HepG2 (cell line): ENCODE measurements at regions of chr11 and their contacts with region 1.

Region 1: GRCh38 chr11:83819933-83820549 is 533.9 kb upstream of the CCDC90B start:
- DNase-seq: peak; percentile 43
- ATAC-seq: peak; percentile 78
- H3K4me3 ChIP-seq: no peak overlapping the region
- H3K27ac ChIP-seq: no peak overlapping the region
- H3K4me1 ChIP-seq: no peaks in the 10 kb centered on the region
- H3K27me3 ChIP-seq: no peaks in the 10 kb centered on the region
- CTCF ChIP-seq: peak; percentile 67
- EP300 ChIP-seq: no peak
- POLR2A ChIP-seq: no peak
- RAD21 ChIP-seq: peak; percentile 45; the same call in 1 of the 2 replicates

Region 2: DNA sequence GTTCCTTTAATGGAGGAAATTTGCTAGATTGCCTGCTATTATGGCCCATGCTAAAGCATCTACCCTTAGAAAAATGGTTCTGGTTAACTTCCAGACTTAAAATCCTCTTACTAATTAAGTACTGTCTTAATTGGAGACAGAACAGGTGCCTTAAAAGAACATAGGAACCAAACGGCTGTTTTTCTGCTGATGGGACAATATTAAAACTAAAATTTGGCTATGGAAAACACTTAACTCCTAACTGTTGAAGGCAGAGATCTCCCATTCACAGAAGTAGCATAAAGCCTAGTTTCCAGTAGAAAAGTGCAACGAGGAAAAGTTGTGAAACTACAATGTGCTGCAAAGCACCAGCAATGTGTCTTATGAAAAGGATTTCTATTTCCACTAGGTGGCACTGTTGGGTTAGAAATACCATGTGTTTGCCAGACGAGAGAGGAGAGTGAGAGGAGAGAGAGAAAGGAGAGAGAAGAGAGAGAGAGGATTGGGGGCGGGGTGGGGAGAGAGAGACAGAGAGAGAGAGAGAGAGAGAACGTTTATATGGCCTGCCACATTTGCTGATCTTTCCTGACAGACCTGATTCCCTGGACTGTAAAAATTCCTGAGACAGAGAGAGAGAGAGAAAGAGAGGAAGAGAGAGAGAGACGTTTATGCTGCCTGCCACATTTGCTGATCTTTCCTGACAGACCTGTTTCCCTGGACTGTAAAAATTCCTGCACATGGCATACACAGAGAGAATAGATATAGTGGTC is 1137.9 kb before region 1 on chr11:
- CTCF ChIA-PET with region 1: interaction called, 3 read pairs
- POLR2A ChIA-PET with region 1: no interaction called
- in situ Hi-C with region 1: no loop called
- intact Hi-C with region 1: loop called (anchors 2 kb)
- DNase-seq: peak; percentile 67
- ATAC-seq: peak; percentile 96
- H3K4me3 ChIP-seq: no peak overlapping the region
- H3K27ac ChIP-seq: no peak overlapping the region
- H3K4me1 ChIP-seq: no peaks in the 10 kb centered on the region
- H3K27me3 ChIP-seq: no peaks in the 10 kb centered on the region
- CTCF ChIP-seq: peak; percentile 82
- EP300 ChIP-seq: no peak
- POLR2A ChIP-seq: no peak
- RAD21 ChIP-seq: peak; percentile 46; the same call in 1 of the 2 replicates

Region 3: GRCh38 chr11:82718307-82718706 is 1101.7 kb before region 1 on chr11:
- CTCF ChIA-PET with region 1: interaction called, 5 read pairs
- POLR2A ChIA-PET with region 1: no interaction called
- in situ Hi-C with region 1: loop called (anchors 25 kb)
- intact Hi-C with region 1: loop called (anchors 1 kb)
- DNase-seq: peak; percentile 7
- ATAC-seq: peak; percentile 72
- H3K4me3 ChIP-seq: no peak overlapping the region
- H3K27ac ChIP-seq: no peak overlapping the region
- H3K4me1 ChIP-seq: no peaks in the 10 kb centered on the region
- H3K27me3 ChIP-seq: peaks cover 0 to 18% of the 10 kb centered on the region in 2 experiments; a peak in 3 of 5 replicates
- CTCF ChIP-seq: peak; percentile 74
- EP300 ChIP-seq: no peak
- POLR2A ChIP-seq: no peak
- RAD21 ChIP-seq: no peak

Region 4: DNA sequence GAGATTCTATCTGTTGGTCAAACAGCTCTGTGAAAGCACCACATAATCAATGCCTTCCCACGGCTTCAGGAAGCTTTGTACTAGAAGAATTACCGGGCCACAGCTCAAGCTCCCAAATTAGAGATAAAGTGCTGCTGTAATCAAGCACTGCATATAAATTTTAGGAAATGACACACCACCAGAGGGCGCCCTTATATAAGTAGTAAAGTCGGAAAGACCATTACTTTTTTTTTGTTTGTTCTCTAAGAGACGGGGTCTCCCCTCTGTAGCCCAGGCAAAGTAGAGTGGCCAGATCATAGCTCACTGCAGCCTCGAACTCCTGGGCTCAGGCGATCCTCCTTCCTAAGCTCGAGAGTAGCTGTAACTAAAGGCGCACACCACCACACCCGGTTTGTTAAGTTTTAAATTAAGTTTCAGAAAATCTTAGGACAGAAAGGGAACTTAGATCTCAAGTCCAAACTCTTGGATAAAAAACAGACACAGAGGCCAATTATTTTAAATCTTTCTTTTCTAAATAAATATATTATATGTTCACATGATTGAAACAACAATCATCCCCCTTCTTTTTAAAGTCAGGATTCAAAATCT is 952.5 kb before region 1 on chr11:
- CTCF ChIA-PET with region 1: interaction called, 10 read pairs
- POLR2A ChIA-PET with region 1: no interaction called
- in situ Hi-C with region 1: loop called (anchors 25 kb)
- intact Hi-C with region 1: loop called (anchors 1 kb)
- DNase-seq: peak; percentile 75
- ATAC-seq: peak; percentile 68
- H3K4me3 ChIP-seq: no peak overlapping the region
- H3K27ac ChIP-seq: no peak overlapping the region
- H3K4me1 ChIP-seq: 0 out of 2 replicates have a peak, but pooled peaks cover 14% of the 10 kb centered on the region
- H3K27me3 ChIP-seq: no peaks in the 10 kb centered on the region
- CTCF ChIP-seq: peak; percentile 76
- EP300 ChIP-seq: no peak
- POLR2A ChIP-seq: no peak
- RAD21 ChIP-seq: peak; percentile 40; the same call in 1 of the 2 replicates

Region 5: GRCh38 chr11:83219095-83219494 is 600.9 kb before region 1 on chr11:
- CTCF ChIA-PET with region 1: interaction called, 8 read pairs
- POLR2A ChIA-PET with region 1: no interaction called
- in situ Hi-C with region 1: loop called (anchors 10 kb)
- intact Hi-C with region 1: loop called (anchors 1 kb)
- DNase-seq: peak; percentile 22
- ATAC-seq: peak; percentile 91
- H3K4me3 ChIP-seq: no peak overlapping the region
- H3K27ac ChIP-seq: no peak overlapping the region
- H3K4me1 ChIP-seq: no peaks in the 10 kb centered on the region
- H3K27me3 ChIP-seq: peaks cover 0 to 1% of the 10 kb centered on the region in 2 experiments; a peak in 2 of 5 replicates
- CTCF ChIP-seq: peak; percentile 80
- EP300 ChIP-seq: no peak
- POLR2A ChIP-seq: no peak
- RAD21 ChIP-seq: peak; percentile 54; the same call in 1 of the 2 replicates

Region 6: DNA sequence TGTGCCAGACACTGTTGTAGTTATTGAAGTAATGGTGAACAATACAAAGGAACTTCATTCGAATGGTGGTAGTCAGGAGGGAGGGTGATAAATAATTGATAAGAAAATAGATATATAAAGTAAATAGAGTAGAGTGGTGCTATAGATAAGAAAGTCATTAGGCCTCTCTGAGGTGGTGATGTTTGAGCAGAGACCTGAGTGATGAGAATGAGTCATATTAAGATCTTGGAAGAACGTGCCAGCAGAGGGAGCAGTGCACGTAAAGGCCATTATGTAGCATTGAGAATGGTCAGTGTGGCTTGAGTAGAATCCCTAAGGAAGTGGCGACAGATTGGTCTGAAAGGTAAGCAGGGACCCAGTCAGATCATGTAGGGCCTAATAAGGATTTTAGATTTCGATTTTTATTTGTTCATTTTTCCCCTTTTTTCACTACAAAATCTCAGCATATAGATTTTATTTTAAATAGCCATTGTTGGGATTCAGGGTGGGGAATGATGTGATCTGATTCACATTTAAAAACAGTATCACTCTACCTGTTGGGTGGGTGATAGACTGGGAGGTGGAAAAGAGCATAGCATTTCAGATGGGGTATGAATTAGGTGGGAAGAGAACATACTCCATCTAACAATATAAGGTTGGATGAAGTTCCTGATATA is 578.6 kb before region 1 on chr11:
- CTCF ChIA-PET with region 1: interaction called, 12 read pairs
- POLR2A ChIA-PET with region 1: no interaction called
- in situ Hi-C with region 1: no loop called
- intact Hi-C with region 1: loop called (anchors 1 kb)
- DNase-seq: peak; percentile 63
- ATAC-seq: peak; percentile 96
- H3K4me3 ChIP-seq: no peak overlapping the region
- H3K27ac ChIP-seq: no peak overlapping the region
- H3K4me1 ChIP-seq: no peaks in the 10 kb centered on the region
- H3K27me3 ChIP-seq: no peaks in the 10 kb centered on the region
- CTCF ChIP-seq: peak; percentile 82
- EP300 ChIP-seq: no peak
- POLR2A ChIP-seq: no peak
- RAD21 ChIP-seq: 0 out of 2 replicates have a peak, but pooled peaks have one; percentile 38

Region 7: DNA sequence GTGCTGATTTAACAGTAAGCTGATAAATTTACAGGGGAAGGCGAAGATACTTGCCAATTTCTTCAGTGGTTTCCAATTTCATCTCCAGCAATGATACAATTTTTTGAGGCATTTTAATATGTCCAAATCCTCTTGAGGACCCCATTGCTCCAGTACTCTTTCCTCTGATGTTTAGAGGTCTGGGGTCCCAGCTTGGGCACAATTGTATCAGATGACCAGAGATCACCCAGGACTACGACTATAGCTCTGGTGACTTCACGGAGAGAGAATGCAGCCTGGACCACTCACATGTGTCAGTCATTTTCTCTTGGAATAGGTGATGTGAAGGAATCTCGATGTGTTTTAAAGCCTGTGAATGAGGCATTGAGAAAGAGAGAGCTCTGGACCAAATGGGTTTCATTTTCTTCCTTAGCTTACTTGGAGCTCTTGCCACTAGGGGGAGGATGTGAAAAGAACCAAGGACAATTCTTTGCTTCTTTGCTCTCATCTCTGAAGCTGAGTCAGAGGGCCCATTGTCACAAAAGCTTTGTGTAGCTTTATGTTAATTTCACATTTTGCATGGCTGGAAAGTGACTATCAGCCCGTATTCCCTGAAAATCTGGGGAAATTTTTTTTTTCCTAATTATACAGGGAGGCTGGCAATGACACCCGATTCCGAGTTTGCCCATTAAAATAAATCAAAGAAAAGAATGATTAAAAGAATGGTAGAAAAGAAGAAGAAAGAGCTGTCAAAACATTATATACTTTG is 527.2 kb before region 1 on chr11:
- CTCF ChIA-PET with region 1: interaction called, 7 read pairs
- POLR2A ChIA-PET with region 1: no interaction called
- in situ Hi-C with region 1: loop called (anchors 5 kb)
- intact Hi-C with region 1: loop called (anchors 1 kb)
- DNase-seq: peak; percentile 57
- ATAC-seq: peak; percentile 87
- H3K4me3 ChIP-seq: no peak overlapping the region
- H3K27ac ChIP-seq: no peak overlapping the region
- H3K4me1 ChIP-seq: no peaks in the 10 kb centered on the region
- H3K27me3 ChIP-seq: no peaks in the 10 kb centered on the region
- CTCF ChIP-seq: peak; percentile 71
- EP300 ChIP-seq: no peak
- POLR2A ChIP-seq: no peak
- RAD21 ChIP-seq: no peak

Region 8: GRCh38 chr11:83317757-83318690 is 502.0 kb before region 1 on chr11:
- CTCF ChIA-PET with region 1: no interaction called
- POLR2A ChIA-PET with region 1: no interaction called
- in situ Hi-C with region 1: no loop called
- intact Hi-C with region 1: no loop called
- DNase-seq: no peak
- ATAC-seq: no peak
- H3K4me3 ChIP-seq: no peak overlapping the region
- H3K27ac ChIP-seq: no peak overlapping the region
- H3K4me1 ChIP-seq: no peaks in the 10 kb centered on the region
- H3K27me3 ChIP-seq: no peaks in the 10 kb centered on the region
- CTCF ChIP-seq: no peak
- EP300 ChIP-seq: no peak
- POLR2A ChIP-seq: no peak
- RAD21 ChIP-seq: no peak

Region 9: GRCh38 chr11:83918476-83918875 is 98.4 kb after region 1 on chr11:
- CTCF ChIA-PET with region 1: no interaction called
- POLR2A ChIA-PET with region 1: no interaction called
- in situ Hi-C with region 1: no loop called
- intact Hi-C with region 1: no loop called
- DNase-seq: no peak
- ATAC-seq: no peak
- H3K4me3 ChIP-seq: no peak overlapping the region
- H3K27ac ChIP-seq: no peak overlapping the region
- H3K4me1 ChIP-seq: no peaks in the 10 kb centered on the region
- H3K27me3 ChIP-seq: no peaks in the 10 kb centered on the region
- CTCF ChIP-seq: no peak
- EP300 ChIP-seq: no peak
- POLR2A ChIP-seq: no peak
- RAD21 ChIP-seq: no peak